ENCODE measurements at regions of chr9 and their contacts with region 1.

Region 1: GRCh38 chr9:13688994-13689600 is 409.6 kb upstream of the MPDZ start:
- DNase-seq: peak in 1 of 5 donors; percentile 32
- ATAC-seq: peak in 1 of 4 donors; percentile 23
- H3K4me3 ChIP-seq: no peak overlapping the region
- H3K27ac ChIP-seq: peak overlapping the region in 6 of 12 donors; percentile 1 to 33 (median 16)
- H3K4me1 ChIP-seq: peaks cover 0 to 30% (median 12%) of the 10 kb centered on the region in 12 donors
- H3K27me3 ChIP-seq: no peaks in the 10 kb centered on the region
- CTCF ChIP-seq: peak; percentile 35 to 64 (median 54)
- POLR2A ChIP-seq: no peak

Region 2: DNA sequence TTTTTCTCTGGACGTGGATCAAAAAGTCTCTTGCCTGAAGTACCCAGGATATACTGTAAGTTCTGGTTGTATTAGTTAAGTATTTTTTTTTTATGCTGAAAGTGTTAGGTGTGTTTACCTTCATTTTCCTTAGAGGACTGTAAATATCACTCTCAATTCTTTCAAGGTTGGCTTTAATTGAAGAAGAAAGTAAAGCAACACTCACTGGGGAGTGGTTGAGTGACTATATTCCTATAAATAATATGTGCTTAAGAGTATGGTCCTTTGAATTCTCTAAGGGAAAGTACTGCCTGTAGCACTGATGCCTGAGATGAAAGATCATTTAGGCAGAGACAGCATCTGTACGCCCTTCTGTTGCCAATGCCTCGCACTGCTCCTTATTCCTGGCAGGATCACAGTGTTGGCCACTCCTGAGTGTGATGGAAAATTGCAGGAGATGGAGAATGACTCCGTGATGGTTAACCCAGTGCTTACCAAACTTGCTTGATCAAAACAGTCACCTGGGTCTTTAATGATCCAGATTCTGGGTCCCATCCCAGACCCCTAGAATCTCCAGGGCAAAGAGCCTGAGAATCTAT is 227.6 kb before region 1 on chr9:
- intact Hi-C with region 1: loop called in 1 of 10 experiments (anchors 10 kb)
- DNase-seq: no peak
- ATAC-seq: peak in 2 of 4 donors; percentile 65 to 75
- H3K4me3 ChIP-seq: no peak overlapping the region
- H3K27ac ChIP-seq: no peak overlapping the region
- H3K4me1 ChIP-seq: peaks cover 0 to 5% (median 0%) of the 10 kb centered on the region in 12 donors
- H3K27me3 ChIP-seq: no peaks in the 10 kb centered on the region
- CTCF ChIP-seq: no peak
- POLR2A ChIP-seq: no peak

Region 3: DNA sequence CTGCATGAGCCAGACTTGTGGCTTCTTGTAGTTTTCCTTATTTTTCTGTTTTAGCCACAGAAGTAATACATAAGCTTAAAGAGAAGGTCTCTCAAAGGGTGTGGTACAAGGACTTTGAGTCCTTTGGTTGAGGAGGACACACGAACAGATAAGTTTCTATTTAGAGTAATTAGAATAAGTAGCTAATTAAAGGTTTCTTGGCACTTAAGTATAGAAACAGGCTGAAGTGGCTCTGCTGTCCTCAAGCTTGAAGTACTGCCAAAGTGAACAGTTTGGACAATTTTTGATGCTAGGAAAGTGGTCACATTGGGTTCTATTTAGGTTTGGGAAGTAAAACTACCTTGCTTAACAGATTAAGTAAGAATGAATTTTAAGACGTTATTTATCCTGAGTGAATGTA is 131.4 kb before region 1 on chr9:
- intact Hi-C with region 1: loop called in 1 of 10 experiments (anchors 10 kb)
- DNase-seq: no peak
- ATAC-seq: peak; percentile 80 to 91 (median 88)
- H3K4me3 ChIP-seq: no peak overlapping the region
- H3K27ac ChIP-seq: peak overlapping the region in 11 of 12 donors; percentile 4 to 69 (median 39)
- H3K4me1 ChIP-seq: peaks cover 0 to 27% (median 0%) of the 10 kb centered on the region in 12 donors
- H3K27me3 ChIP-seq: no peaks in the 10 kb centered on the region
- CTCF ChIP-seq: no peak
- POLR2A ChIP-seq: no peak

Region 4: DNA sequence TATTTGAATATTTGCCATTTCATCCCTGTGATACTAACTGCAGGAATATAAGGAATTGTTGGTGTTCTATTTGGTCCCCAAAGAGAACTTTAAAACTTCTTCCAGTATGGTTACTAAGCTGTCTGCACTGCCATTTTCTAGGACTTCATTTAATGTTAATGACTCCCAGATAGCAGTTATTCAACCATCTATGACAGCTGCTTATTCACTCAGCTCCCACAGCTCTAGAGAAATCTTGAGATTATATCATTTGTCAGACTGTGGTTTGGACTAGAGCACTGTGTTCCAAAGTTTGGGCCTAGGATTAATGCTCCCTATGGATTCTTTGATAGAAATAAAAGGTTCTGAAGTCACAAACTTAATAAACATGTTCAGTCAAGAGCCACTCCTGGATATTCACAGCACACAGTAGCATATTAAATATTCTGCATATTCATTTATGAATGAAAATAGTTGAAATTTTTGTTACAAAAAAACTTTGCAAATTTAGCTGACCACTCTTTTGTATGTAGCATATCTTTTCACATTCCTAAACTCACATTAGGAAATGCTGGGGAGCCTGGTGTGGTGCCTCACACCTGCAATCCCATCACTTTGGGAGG is 451.1 kb after region 1 on chr9:
- intact Hi-C with region 1: no loop called
- DNase-seq: no peak
- ATAC-seq: peak in 2 of 4 donors; percentile 28 to 34
- H3K4me3 ChIP-seq: no peak overlapping the region
- H3K27ac ChIP-seq: peak overlapping the region in 1 of 12 donors; percentile 5
- H3K4me1 ChIP-seq: peaks cover 0 to 31% (median 6%) of the 10 kb centered on the region in 12 donors
- H3K27me3 ChIP-seq: no peaks in the 10 kb centered on the region
- CTCF ChIP-seq: no peak
- POLR2A ChIP-seq: no peak